Colonic mucosa (tissue), 4 donors: ENCODE measurements at regions of chr1 and their contacts with region 1.

Region 1: GRCh38 chr1:226255380-226255779 is 31.9 kb downstream of the MIXL1 start:
- DNase-seq: no peak
- H3K4me3 ChIP-seq: no peak overlapping the region
- H3K27ac ChIP-seq: no peak overlapping the region
- H3K4me1 ChIP-seq: no peaks in the 10 kb centered on the region
- H3K27me3 ChIP-seq: no peaks in the 10 kb centered on the region
- CTCF ChIP-seq: no peak

Region 2: GRCh38 chr1:226046240-226046639 is 209.1 kb before region 1 on chr1:
- intact Hi-C with region 1: no loop called
- DNase-seq: no peak
- H3K4me3 ChIP-seq: no peak overlapping the region
- H3K27ac ChIP-seq: no peak overlapping the region
- H3K4me1 ChIP-seq: no peaks in the 10 kb centered on the region
- H3K27me3 ChIP-seq: no peaks in the 10 kb centered on the region
- CTCF ChIP-seq: no peak

Region 3: DNA sequence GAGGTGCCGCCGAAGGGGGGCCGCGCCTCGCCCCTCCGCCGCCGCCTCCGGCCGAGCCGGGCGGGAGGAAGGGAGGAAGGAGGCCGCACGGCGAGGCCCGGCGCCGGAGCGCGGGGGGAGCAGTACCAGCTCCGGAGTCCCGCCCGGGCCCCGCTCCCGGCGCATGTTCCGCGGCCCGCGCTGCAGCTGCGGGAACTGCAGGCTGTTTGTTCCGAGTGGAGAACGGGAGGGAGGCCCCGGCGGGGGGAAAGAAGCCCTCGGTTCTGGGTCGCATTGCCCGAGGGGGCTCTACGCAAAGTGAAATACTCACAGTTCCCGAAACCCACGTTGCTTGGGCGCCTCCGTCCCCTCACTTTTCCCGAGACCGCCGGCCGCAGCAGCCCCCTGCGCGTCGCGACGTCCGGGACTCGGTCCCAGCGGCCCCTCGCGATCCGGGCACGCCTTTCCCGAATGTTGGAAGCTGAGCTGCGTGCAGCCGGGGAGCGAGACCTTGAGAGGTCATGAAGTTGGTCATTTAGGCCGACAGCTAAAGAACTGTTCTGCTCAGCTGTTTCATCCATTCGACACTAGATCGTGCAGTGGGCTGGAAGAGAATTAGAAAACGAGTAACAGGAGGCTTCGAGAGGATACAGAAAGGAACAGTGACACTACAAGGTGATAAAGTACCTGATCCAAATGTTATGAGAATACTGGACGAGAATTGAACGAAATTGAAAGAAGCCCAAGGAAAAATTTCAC is 54.1 kb after region 1 on chr1:
- intact Hi-C with region 1: loop called (anchors 5 kb)
- DNase-seq: peak; percentile 35
- H3K4me3 ChIP-seq: peak overlapping the region; percentile 64
- H3K27ac ChIP-seq: peak overlapping the region; percentile 39
- H3K4me1 ChIP-seq: peaks cover 8% of the 10 kb centered on the region
- H3K27me3 ChIP-seq: no peaks in the 10 kb centered on the region
- CTCF ChIP-seq: no peak